Activated CD4-positive, alpha-beta T cell treated with anti-CD3 and anti-CD28 coated beads for 36 hours (primary cell): ENCODE measurements at regions of chr22 and their contacts with region 1.

Region 1: GRCh38 chr22:40679964-40680818 is 907 bp downstream of the MCHR1 start:
- DNase-seq: no peak
- ATAC-seq: no peak
- H3K4me3 Mint-ChIP-seq: no peak overlapping the region
- H3K27ac Mint-ChIP-seq: no peak overlapping the region
- H3K4me1 Mint-ChIP-seq: peaks cover 22% of the 10 kb centered on the region
- H3K27me3 Mint-ChIP-seq: peaks cover 10% of the 10 kb centered on the region

Region 2: DNA sequence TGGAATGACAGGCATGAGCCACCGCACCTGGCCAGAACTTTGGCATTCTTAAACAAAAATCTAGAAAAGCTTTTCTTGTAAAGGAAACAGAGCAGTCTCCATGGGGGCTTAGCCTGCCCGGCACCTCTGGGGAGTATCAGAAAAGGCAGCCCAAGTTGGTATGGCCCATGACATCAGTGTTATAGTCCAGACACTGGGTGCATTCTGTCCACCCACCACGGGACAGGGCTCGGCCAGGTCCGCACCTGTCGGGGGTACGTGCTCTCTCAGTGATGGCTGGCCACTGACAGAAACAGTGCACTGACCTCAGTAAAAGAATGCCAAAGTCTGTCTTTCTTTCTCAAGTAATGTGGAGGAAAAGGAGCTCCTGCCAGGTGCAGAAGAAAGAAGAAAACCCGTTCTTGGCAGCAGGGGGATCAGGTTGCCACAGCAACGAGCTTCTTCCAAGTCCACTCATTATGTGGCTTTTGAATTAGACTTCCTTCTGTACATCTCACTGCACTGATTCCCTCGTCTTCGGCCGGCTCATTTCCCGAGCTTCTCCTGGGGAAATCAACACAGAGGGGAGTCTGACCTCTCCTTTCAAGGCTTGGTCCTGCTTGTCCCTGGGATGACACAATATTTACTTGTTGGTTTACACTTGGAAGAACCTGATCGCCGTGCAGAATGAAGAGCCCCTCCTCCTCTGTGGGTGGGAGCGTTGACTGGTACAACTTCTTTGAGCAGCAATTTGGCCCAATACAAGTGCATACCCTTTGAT is 34.2 kb after region 1 on chr22:
- CTCF ChIA-PET with region 1: interaction called, 23 read pairs
- POLR2A ChIA-PET with region 1: no interaction called
- intact Hi-C with region 1: loop called (anchors 1 to 2 kb)
- DNase-seq: no peak
- ATAC-seq: no peak
- H3K4me3 Mint-ChIP-seq: no peak overlapping the region
- H3K27ac Mint-ChIP-seq: no peak overlapping the region
- H3K4me1 Mint-ChIP-seq: peaks cover 20% of the 10 kb centered on the region
- H3K27me3 Mint-ChIP-seq: peaks cover 3% of the 10 kb centered on the region

Region 3: DNA sequence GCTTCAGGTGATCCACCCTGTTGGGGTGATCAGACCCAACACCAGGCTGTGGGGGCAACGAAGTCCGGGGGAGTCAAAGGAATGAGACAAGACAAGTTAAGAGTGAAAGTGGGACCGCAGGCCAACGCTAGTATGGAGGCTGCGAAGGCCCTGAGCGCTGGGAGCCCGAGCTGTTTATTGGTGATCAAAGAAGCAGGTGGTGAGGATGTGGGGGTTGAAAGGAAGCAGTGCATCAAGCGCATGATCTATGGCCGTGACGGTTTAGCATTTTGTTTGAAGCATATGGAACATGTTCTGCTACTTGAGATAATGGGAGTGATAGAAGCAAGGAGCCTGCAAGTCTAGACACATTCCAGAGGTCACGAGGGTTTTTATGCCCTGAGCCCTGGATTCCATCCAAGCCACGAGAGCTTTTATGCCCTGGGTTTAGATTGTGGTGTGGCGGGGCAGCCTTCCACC is 48.6 kb after region 1 on chr22:
- CTCF ChIA-PET with region 1: interaction called, 3 read pairs
- POLR2A ChIA-PET with region 1: no interaction called
- intact Hi-C with region 1: loop called (anchors 1 to 5 kb)
- DNase-seq: peak; percentile 75
- ATAC-seq: peak; percentile 23
- H3K4me3 Mint-ChIP-seq: peak overlapping the region; percentile 64
- H3K27ac Mint-ChIP-seq: peak overlapping the region; percentile 94
- H3K4me1 Mint-ChIP-seq: peaks cover 50% of the 10 kb centered on the region
- H3K27me3 Mint-ChIP-seq: no peaks in the 10 kb centered on the region

Region 4: DNA sequence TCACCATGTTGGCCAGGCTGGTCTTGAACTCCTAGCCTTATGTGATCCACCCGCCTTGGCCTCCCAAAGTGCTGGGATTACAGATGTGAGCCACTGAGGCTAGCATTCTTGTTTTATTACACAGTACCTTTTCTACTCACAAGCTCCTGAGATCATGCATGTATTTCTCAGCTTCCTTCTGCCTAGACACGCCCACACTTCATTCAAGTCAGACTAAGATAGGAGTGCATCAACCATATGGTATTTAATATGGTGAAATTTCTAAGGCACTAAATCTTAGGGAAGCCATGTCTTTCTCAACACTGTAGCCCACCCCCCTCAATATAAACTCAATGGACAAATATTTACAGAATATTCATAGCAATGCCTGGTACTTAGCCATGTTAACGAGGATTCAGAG is 76.9 kb after region 1 on chr22:
- CTCF ChIA-PET with region 1: interaction called, 43 read pairs
- POLR2A ChIA-PET with region 1: no interaction called
- intact Hi-C with region 1: loop called (anchors 1 kb)
- DNase-seq: no peak
- ATAC-seq: peak; percentile 36
- H3K4me3 Mint-ChIP-seq: no peak overlapping the region
- H3K27ac Mint-ChIP-seq: no peak overlapping the region
- H3K4me1 Mint-ChIP-seq: peaks cover 3% of the 10 kb centered on the region
- H3K27me3 Mint-ChIP-seq: no peaks in the 10 kb centered on the region

Region 5: DNA sequence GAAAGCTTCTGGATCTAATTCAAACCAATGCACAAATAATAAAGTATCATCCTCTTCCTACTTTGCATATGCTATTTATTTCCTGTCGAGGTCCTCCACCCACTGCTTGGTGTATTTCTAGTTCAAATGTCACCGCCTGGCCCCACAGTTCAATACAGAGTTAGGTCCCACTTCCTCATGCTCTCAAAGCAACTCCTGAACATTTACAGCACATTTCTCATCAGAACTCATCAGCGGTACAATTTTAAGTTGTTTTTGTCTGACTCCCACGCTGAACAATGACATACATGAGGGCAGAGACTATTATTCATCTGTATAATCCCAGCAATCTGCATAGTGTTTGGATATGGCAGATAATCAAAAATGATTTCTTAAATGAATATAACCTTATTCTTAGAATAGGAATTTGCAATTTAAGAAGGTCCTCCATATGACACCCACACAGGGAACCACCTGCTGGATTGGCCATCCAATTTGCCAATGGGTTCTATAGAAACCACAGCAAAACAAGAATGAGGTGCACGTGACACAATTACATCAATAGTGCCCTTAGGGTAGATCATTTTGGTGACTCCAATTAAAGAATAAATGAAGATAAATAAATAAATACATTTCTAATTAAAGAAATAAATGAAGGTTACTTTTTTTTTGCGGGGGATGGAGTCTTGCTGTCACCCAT is 84.7 kb after region 1 on chr22:
- CTCF ChIA-PET with region 1: interaction called, 43 read pairs
- POLR2A ChIA-PET with region 1: interaction called, 4 read pairs
- intact Hi-C with region 1: loop called (anchors 1 kb)
- DNase-seq: peak; percentile 32
- ATAC-seq: peak; percentile 61
- H3K4me3 Mint-ChIP-seq: no peak overlapping the region
- H3K27ac Mint-ChIP-seq: peak overlapping the region; percentile 84
- H3K4me1 Mint-ChIP-seq: peaks cover 23% of the 10 kb centered on the region
- H3K27me3 Mint-ChIP-seq: no peaks in the 10 kb centered on the region

Region 6: DNA sequence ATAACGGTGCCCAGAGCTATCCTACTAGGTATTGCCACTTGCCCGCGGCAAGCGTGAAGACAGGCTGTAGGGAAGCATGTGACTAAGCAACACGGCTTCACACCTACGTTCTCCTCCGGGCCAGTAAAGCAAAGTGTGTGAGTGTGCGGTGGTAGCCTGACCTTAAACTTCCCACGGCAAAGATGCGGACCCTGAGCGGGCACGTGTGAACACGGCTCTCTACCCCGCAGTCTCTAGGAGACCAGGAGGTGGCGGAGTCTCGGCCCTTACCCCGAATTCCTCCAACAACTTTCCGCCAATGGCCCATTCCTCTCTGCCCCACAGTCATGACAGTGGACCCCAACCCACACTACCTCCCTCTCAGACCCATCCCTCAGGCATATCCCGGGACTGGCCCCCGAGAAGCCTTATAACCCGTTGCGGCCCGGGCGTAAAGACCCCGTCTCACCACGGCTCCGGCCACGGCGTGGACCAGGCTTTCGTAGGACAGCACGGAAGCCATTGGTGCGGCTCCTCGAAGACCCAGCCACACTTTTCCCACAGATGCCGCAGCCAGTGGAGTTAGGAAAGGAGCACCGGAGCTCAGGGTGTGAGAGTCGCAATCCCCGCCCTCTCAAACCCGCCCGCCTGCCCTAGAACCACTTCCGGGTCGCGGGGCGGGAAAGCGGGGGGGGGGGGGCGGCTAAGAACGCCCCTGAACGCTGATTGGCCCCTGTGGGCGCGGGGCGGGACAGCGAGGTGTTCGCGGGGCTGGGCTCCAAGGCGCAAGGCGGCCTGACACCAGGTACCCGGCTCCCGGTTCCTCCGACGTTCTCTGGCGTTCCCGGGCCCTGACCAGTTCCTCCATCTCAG is 138.8 kb after region 1 on chr22 and contains the start of gene SLC25A17:
- CTCF ChIA-PET with region 1: interaction called, 3 read pairs
- POLR2A ChIA-PET with region 1: interaction called, 4 read pairs
- intact Hi-C with region 1: loop called (anchors 1 kb)
- DNase-seq: peak; percentile 93
- ATAC-seq: peak; percentile 93
- H3K4me3 Mint-ChIP-seq: peak within 1 kb of the TSS; percentile 88
- H3K27ac Mint-ChIP-seq: peak within 1 kb of the TSS; percentile 92
- H3K4me1 Mint-ChIP-seq: peaks cover 30% of the 10 kb centered on the region
- H3K27me3 Mint-ChIP-seq: no peaks in the 10 kb centered on the region
- total RNA-seq, gene SLC25A17: 23.3 to 29.7 TPM

Region 7: GRCh38 chr22:40898850-40899357 is 218.7 kb after region 1 on chr22:
- CTCF ChIA-PET with region 1: interaction called, 13 read pairs
- POLR2A ChIA-PET with region 1: interaction called, 6 read pairs
- intact Hi-C with region 1: loop called (anchors 1 to 2 kb)
- DNase-seq: peak; percentile 38
- ATAC-seq: peak; percentile 94
- H3K4me3 Mint-ChIP-seq: peak overlapping the region; percentile 15
- H3K27ac Mint-ChIP-seq: peak overlapping the region; percentile 81
- H3K4me1 Mint-ChIP-seq: peaks cover 14% of the 10 kb centered on the region
- H3K27me3 Mint-ChIP-seq: no peaks in the 10 kb centered on the region